Mammary epithelial cell (primary cell): ENCODE measurements at regions of chr15 and their contacts with region 1.

Region 1: GRCh38 chr15:63157118-63157843 is at the start of gene RPS27L:
- DNase-seq: peak; percentile 92
- H3K4me3 ChIP-seq: peak within 1 kb of the TSS; percentile 89 to 93 (median 91)
- H3K27ac ChIP-seq: peak within 1 kb of the TSS; percentile 95
- H3K4me1 ChIP-seq: peaks cover 3% of the 10 kb centered on the region
- H3K27me3 ChIP-seq: no peaks in the 10 kb centered on the region
- CTCF ChIP-seq: no peak
- total RNA-seq, gene RPS27L: 40.5 to 141 TPM

Region 2: DNA sequence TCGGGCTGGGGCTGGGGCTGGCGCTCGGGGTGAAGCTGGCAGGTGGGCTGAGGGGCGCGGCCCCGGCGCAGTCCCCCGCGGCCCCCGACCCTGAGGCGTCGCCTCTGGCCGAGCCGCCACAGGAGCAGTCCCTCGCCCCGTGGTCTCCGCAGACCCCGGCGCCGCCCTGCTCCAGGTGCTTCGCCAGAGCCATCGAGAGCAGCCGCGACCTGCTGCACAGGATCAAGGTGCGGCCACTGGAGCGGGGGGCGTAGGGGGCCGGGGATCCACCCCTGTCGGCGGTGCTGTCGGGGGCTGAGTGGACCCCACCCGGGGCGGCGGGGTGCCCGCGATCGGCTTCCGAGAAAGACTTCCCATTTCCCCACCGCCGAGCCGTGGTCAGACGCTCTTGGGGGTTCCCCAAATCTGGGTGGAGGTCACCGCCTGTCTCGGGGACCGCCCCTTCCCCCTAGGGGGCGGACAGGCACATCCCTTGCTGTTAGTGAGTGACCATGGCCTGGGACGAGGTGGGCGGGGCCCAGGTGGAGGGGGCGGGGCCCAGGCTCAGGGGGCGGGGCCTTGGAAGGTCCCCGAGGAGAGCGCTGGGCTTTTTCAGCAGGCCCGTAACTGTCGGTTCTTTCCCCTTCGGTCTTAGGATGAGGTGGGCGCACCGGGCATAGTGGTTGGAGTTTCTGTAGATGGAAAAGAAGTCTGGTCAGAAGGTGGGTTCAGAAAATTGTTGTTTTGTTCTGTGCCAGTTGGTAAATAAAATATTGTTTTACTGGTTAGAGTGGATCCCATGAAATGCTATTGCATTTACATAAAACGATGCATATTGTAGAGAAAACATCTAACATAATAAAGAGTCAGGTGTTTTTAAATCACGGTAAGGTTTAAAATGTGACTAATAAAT is 35.0 kb before region 1 on chr15:
- CTCF ChIA-PET with region 1: no interaction called
- dilution Hi-C with region 1: no loop called
- in situ Hi-C with region 1: no loop called
- intact Hi-C with region 1: loop called (anchors 2 kb)
- DNase-seq: peak; percentile 87
- H3K4me3 ChIP-seq: peak overlapping the region; percentile 81 to 99 (median 96)
- H3K27ac ChIP-seq: peak overlapping the region; percentile 70
- H3K4me1 ChIP-seq: no peaks in the 10 kb centered on the region
- H3K27me3 ChIP-seq: no peaks in the 10 kb centered on the region
- CTCF ChIP-seq: peak in 1 of 2 donors; percentile 27

Region 3: DNA sequence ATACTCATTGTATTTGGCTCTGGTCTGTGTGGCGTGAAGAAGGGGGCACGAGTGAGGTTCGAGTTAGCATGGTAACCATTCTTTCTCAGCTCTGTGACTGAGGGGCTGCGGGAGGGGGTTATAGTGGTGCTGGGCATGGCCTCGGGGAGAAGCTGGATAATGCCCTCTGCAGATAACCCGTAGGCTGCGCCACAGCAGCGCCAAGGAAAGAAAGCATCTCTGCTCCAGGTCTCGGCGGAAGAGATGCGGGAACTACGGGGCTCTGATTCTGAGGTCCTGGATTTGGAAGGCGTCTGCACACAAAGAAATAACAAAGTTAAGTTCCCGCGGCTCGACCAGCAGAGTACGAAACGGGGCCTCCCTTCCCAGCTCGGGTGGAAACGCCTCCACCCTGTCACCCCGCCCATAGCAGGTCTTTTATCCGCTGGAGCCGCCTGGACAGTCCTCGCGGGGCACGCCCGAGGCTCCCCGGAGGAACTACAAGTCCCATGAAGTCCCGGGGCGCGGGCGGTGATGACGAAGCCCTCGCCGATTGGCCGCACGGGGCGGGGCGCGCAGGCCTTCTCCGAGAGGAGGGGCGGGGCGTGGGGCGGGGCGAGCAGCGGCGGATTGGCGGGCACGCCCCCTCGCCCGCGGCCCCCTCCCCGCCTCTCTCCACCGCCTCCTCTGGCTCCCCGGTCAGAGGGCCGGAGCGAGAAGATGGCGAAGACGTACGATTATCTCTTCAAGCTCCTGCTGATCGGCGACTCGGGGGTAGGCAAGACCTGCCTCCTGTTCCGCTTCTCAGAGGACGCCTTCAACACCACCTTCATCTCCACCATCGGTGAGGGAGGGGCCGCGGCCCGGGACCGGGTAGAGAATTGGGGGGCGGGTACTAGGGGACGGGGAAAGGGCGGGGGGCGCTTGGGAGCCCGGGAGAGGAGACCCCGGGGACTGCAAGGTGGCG is 31.9 kb after region 1 on chr15 and contains the start of gene RAB8B:
- CTCF ChIA-PET with region 1: no interaction called
- dilution Hi-C with region 1: no loop called
- in situ Hi-C with region 1: no loop called
- intact Hi-C with region 1: loop called (anchors 1 kb)
- DNase-seq: peak; percentile 94
- H3K4me3 ChIP-seq: peak within 1 kb of the TSS; percentile 72 to 95 (median 88)
- H3K27ac ChIP-seq: peak within 1 kb of the TSS; percentile 55
- H3K4me1 ChIP-seq: peaks cover 48% of the 10 kb centered on the region
- H3K27me3 ChIP-seq: no peaks in the 10 kb centered on the region
- CTCF ChIP-seq: no peak
- total RNA-seq, gene RAB8B: 20.6 to 36.3 TPM

Region 4: GRCh38 chr15:63250312-63250965 is 93.2 kb after region 1 on chr15:
- CTCF ChIA-PET with region 1: no interaction called
- dilution Hi-C with region 1: no loop called
- in situ Hi-C with region 1: no loop called
- intact Hi-C with region 1: loop called (anchors 2 kb)
- DNase-seq: peak; percentile 98
- H3K4me3 ChIP-seq: no peak overlapping the region
- H3K27ac ChIP-seq: peak overlapping the region; percentile 69
- H3K4me1 ChIP-seq: peaks cover 33% of the 10 kb centered on the region
- H3K27me3 ChIP-seq: no peaks in the 10 kb centered on the region
- CTCF ChIP-seq: no peak

Region 5: DNA sequence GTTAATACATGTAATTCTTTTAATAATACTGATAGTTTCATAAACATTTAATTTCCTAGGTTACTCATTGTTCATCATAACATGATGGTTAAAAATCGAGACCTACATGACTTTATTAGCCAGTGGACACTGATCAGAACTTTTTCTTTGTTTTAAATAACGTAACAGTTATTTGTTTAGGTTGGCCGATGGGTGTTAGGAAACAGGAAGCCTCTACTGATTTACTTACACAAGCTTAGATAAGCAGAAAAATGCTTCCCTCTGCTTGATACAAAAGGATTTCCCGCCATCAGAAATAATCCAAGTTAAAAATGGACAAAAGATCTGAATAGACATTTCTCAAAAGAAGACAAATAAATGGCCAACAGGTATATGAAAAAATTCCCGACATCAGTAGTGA is 103.5 kb after region 1 on chr15:
- CTCF ChIA-PET with region 1: no interaction called
- dilution Hi-C with region 1: no loop called
- in situ Hi-C with region 1: no loop called
- intact Hi-C with region 1: no loop called
- DNase-seq: no peak
- H3K4me3 ChIP-seq: no peak overlapping the region
- H3K27ac ChIP-seq: no peak overlapping the region
- H3K4me1 ChIP-seq: peaks cover 6% of the 10 kb centered on the region
- H3K27me3 ChIP-seq: no peaks in the 10 kb centered on the region
- CTCF ChIP-seq: no peak

Region 6: GRCh38 chr15:63381301-63382204 is 224.3 kb after region 1 on chr15 and contains the start of gene CA12:
- CTCF ChIA-PET with region 1: no interaction called
- dilution Hi-C with region 1: no loop called
- in situ Hi-C with region 1: loop called in 1 of 2 experiments (anchors 25 kb)
- intact Hi-C with region 1: no loop called
- DNase-seq: peak; percentile 56
- H3K4me3 ChIP-seq: peak within 1 kb of the TSS; percentile 73 to 83 (median 81)
- H3K27ac ChIP-seq: peak within 1 kb of the TSS; percentile 77
- H3K4me1 ChIP-seq: peaks cover 63% of the 10 kb centered on the region
- H3K27me3 ChIP-seq: no peaks in the 10 kb centered on the region
- CTCF ChIP-seq: no peak
- total RNA-seq, gene CA12: 174 to 202 TPM